ENCODE measurements at regions of chr22 and their contacts with region 1.

Region 1: DNA sequence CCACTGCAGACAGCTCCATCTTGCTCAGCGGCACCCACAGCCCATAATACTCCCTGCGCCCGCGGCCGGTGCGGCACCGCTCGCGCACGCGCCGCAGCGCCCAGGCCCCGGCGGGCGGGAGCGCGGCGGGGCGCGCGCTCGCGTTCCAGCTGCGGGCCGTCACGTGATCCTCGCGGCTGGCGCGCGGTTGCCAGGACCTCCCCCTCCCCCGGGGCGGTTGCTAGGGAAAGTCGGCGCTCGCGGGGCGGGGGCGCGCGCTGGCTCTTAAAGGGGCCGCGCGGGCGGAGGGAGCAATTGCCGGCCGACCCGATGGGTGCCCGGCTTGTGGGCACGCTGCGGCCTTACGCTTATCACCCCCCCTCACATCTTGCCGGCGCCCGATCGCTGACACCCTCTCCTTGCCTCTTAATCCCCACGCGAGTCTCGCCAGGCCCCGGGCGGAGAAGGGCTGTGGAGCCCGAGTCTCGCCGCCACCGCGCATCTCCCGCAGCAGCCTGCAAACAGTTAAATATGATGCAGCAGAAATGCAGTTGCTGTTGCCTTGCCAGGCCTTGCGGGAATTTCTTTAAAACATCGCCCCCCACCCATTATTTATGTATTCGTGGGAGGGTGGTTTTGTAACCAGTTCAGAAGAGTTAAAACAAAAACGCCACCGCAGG is at the start of gene CBX6:
- DNase-seq: peak; percentile 95
- ATAC-seq: peak; percentile 78
- H3K4me3 Mint-ChIP-seq: peak within 1 kb of the TSS; percentile 91
- H3K27ac Mint-ChIP-seq: peak within 1 kb of the TSS; percentile 89
- H3K4me1 Mint-ChIP-seq: peaks cover 45% of the 10 kb centered on the region
- H3K27me3 Mint-ChIP-seq: peaks cover 22% of the 10 kb centered on the region
- total RNA-seq, gene CBX6: 61.4 to 61.8 TPM

Region 2: DNA sequence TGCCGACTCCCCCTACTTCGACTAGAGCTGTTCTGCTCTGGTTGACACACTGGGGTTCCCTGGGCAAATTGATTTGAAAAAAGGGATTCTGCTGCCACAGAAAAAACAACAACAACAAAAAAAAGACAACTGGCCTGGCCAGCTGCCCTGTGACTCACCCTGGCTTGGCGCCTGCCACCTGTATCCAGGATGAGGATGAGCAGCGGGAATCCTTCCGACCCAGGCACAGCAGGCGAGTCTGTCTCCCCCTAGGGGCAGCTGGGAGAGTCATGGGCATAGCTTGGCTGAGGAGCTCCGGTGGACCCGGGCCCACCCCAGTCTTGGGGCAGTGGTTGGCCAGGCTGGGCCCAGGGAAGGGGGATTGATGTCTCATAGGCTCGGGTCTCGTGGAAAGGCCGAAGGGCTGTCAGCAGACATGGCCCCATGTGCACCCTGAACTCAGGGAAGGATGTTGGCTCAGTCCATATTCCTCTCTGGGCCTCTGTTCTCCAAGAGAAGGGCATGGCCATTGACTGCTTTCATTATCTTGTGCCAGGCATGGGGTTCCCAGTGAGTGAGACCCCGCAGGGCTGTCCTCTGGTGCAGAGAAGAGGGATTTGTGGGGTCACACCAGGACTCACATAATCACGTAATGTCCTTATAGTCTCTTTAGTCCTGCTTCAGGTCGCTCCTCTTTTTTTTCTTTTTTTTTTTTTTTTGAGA is 106.1 kb before region 1 on chr22:
- CTCF ChIA-PET with region 1: interaction called, 10 read pairs
- POLR2A ChIA-PET with region 1: no interaction called
- DNase-seq: peak; percentile 46
- ATAC-seq: peak; percentile 62
- H3K4me3 Mint-ChIP-seq: no peak overlapping the region
- H3K27ac Mint-ChIP-seq: no peak overlapping the region
- H3K4me1 Mint-ChIP-seq: peaks cover 3% of the 10 kb centered on the region
- H3K27me3 Mint-ChIP-seq: no peaks in the 10 kb centered on the region

Region 3: DNA sequence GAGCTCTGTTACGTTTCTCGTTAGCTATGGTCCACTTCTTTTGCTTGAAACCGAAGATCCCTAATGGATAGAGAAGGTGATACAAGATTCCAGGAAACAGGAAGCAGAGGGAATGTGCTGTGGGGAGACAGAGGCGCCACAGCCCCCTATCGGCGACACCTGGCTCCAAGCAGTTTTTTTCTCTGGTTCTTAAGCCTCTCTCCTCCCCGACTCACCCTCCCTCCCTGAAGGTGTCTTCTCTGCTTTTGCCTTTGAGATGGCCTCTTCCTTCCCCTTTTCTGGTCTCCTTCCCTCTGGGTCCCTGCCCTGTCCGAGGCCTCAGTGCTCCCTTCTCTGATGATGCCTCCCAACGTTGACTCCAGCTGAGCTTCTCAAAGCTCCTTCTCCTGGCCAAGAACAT is 70.9 kb after region 1 on chr22:
- CTCF ChIA-PET with region 1: interaction called, 12 read pairs
- POLR2A ChIA-PET with region 1: no interaction called
- DNase-seq: no peak
- ATAC-seq: no peak
- H3K4me3 Mint-ChIP-seq: no peak overlapping the region
- H3K27ac Mint-ChIP-seq: no peak overlapping the region
- H3K4me1 Mint-ChIP-seq: peaks cover 34% of the 10 kb centered on the region
- H3K27me3 Mint-ChIP-seq: peaks cover 34% of the 10 kb centered on the region

Region 4: DNA sequence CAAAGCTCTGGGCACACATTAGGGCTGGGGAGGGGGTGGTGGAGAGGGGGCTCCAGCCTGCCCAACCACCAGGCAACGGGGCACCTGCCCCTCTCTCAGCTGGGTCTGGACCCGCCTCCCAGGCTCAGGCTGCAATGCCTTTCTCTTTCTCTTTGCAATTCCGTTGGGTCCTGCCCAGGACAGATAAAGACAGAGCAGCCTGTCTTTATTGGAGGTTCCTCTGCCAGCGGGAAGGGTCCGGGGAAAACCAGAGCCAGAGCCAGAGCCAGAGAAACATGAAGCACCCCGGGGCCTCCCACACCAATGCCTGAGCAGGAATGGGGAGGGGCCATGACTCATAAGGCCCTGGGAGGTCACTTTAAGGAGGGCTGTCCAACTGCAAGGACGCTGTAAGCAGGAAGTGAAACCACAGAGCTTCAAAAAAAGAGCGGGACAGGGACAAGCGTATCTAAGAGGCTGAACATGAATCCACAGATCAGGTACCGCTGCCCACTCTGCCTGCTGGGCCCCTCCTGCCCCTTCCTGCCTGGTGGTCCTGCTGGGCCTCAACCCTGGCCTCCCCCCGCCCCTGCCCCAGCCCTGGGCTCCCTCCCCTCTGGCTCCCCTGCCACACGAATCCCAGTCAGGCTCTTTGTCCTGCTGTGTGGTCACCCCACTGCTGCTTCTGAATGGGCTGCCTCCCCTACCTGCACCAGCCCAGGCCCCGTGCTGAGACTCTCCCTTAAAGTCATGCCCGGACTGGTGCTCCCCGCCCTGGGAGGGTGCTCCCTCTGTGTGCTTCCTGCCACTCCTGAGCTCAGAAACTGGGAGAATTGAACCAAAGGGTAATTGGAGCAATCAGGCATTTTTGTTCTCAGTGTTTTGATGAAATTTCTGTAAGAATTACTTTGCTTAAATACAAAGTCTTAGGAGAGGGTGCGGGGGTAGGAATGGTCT is 110.0 kb after region 1 on chr22 and contains the start of gene APOBEC3B:
- CTCF ChIA-PET with region 1: interaction called, 35 read pairs
- POLR2A ChIA-PET with region 1: no interaction called
- DNase-seq: peak; percentile 86
- ATAC-seq: peak; percentile 75
- H3K4me3 Mint-ChIP-seq: peak within 1 kb of the TSS; percentile 75
- H3K27ac Mint-ChIP-seq: peak within 1 kb of the TSS; percentile 95
- H3K4me1 Mint-ChIP-seq: peaks cover 52% of the 10 kb centered on the region
- H3K27me3 Mint-ChIP-seq: peaks cover 6% of the 10 kb centered on the region
- total RNA-seq, gene APOBEC3B: 12.1 to 13.3 TPM

Region 5: GRCh38 chr22:39117585-39118191 is 245.4 kb after region 1 on chr22:
- CTCF ChIA-PET with region 1: interaction called, 22 read pairs
- POLR2A ChIA-PET with region 1: no interaction called
- DNase-seq: peak; percentile 91
- ATAC-seq: peak; percentile 83
- H3K4me3 Mint-ChIP-seq: peak overlapping the region; percentile 62
- H3K27ac Mint-ChIP-seq: peak overlapping the region; percentile 84
- H3K4me1 Mint-ChIP-seq: peaks cover 48% of the 10 kb centered on the region
- H3K27me3 Mint-ChIP-seq: no peaks in the 10 kb centered on the region

Region 6: DNA sequence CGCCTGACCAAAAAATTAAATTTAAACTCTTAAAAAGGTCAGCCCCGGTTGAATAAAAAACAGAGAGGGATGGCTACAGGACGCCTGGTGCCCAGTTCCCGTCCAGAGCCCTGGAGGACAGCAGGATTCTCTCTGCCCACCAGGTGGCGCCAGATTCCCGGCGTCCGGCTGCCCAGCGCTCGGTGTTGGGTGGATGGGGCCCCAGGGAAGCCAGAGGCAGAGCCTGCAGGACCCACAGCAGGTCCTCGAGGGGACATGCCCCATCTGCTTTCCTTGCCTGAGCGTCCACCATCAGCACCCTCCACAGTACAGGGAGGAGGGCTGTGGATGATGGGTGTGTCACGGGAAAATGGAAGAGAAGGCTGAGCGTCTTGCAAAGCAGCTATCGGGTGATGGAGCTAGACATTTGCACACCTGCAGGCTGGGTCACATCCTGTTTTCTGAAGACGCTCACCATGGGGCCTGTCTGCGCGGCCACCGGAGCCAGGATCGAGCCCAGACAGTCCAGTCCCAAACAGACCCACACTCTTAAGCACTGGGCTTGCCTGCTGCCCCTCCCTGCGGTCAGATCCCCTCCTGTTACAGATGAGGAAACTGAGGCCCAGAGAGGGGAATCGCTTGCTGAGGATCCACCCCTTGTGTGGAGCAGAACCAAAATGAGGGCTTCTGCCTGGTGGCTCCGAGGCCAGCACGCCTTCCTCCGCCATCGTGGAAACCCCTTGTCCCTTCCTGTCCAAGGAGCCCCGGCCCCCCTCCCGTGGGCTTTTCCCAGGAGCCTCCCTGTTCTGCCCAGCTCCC is 298.7 kb after region 1 on chr22:
- CTCF ChIA-PET with region 1: interaction called, 13 read pairs
- POLR2A ChIA-PET with region 1: no interaction called
- DNase-seq: peak; percentile 88
- ATAC-seq: peak; percentile 78
- H3K4me3 Mint-ChIP-seq: peak overlapping the region; percentile 66
- H3K27ac Mint-ChIP-seq: peak overlapping the region; percentile 79
- H3K4me1 Mint-ChIP-seq: peaks cover 43% of the 10 kb centered on the region
- H3K27me3 Mint-ChIP-seq: peaks cover 12% of the 10 kb centered on the region

Measured in activated CD8-positive, alpha-beta T cell treated with anti-CD3 and anti-CD28 coated beads, Interleukin-2, amount 10 ng/mL, durations not matched to agents 7 days and 5 days (primary cell).